ENCODE measurements at regions of chr7 and their contacts with region 1.

Region 1: GRCh38 chr7:128739048-128739962 is at the start of gene CALU:
- DNase-seq: peak; percentile 99
- H3K4me3 Mint-ChIP-seq: peak within 1 kb of the TSS; percentile 99
- H3K27ac Mint-ChIP-seq: peak within 1 kb of the TSS; percentile 93
- H3K4me1 Mint-ChIP-seq: peaks cover 28% of the 10 kb centered on the region
- H3K27me3 Mint-ChIP-seq: no peaks in the 10 kb centered on the region
- total RNA-seq, gene CALU: 56.2 and 57.2 TPM in 2 replicates

Region 2: DNA sequence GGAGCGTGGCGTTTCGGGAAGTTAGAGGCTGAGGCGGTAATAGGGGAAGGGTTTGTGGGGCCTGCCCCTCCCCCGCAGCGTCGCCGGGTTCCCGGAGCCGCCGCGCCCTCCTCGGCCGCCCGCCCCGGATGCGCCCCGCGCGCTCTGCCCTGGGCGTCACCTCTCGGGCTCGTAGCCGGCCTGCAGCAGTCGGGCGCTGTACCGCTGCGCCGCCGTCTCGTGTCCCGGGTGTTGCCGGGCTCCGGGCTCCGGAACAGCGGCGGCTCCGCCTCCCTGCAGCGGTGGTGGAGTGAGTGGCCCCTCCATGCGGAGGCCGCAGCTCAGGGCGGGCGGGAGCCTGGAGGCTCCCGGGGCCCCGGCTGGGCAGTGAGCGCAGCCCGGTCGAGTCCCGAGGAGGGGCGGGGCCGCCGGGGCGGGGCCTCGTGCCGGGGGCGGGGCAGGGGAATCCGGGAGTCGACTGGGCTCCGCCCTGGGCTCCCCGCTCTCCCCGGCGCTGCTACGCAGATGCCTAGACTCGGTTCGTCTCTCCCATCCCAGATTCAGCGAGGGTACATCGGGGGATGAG is 329.6 kb before region 1 on chr7 and contains the start of gene IMPDH1:
- intact Hi-C with region 1: loop called (anchors 5 kb)
- DNase-seq: peak; percentile 96
- H3K4me3 Mint-ChIP-seq: peak within 1 kb of the TSS; percentile 93
- H3K27ac Mint-ChIP-seq: peak within 1 kb of the TSS; percentile 87
- H3K4me1 Mint-ChIP-seq: peaks cover 37% of the 10 kb centered on the region
- H3K27me3 Mint-ChIP-seq: peaks cover 22% of the 10 kb centered on the region
- total RNA-seq, gene IMPDH1: 102 and 105 TPM in 2 replicates

Region 3: DNA sequence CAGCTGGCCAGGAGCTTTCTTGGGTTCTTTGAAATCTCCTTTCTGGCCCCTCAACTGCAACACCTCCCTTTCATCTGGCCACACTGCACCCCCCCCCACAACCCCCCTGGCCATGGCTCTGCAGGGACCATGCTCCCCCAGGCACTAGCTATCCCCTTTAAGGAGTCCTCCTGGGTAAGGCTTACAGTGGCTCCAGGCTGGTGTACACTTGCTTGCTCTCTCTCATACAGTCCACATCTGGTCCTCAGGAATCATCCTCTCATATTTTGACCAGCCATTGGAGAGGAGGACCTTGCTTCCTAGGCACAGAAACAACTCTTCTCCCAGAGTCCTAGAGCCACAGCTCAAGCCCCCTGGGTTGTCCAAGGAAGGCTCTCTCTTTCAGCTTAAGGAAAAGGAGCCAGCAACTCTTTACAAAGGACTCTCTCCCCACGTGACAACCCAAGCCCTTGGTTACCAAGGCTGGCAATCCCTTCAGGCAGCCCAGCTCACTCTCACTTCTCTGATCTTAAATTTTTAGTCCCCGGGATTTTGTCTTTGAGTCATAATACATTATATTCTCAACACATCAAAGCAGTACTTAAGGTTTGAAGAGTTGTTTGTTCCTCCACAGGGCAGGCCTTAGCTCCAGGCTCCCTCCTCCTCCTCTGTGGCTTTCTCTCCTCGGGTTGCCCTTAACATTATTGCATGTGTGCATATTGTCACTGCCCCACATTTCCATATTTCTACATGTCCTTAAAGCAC is 57.3 kb before region 1 on chr7:
- intact Hi-C with region 1: no loop called
- DNase-seq: no peak
- H3K4me3 Mint-ChIP-seq: no peak overlapping the region
- H3K27ac Mint-ChIP-seq: no peak overlapping the region
- H3K4me1 Mint-ChIP-seq: no peaks in the 10 kb centered on the region
- H3K27me3 Mint-ChIP-seq: no peaks in the 10 kb centered on the region

Region 4: DNA sequence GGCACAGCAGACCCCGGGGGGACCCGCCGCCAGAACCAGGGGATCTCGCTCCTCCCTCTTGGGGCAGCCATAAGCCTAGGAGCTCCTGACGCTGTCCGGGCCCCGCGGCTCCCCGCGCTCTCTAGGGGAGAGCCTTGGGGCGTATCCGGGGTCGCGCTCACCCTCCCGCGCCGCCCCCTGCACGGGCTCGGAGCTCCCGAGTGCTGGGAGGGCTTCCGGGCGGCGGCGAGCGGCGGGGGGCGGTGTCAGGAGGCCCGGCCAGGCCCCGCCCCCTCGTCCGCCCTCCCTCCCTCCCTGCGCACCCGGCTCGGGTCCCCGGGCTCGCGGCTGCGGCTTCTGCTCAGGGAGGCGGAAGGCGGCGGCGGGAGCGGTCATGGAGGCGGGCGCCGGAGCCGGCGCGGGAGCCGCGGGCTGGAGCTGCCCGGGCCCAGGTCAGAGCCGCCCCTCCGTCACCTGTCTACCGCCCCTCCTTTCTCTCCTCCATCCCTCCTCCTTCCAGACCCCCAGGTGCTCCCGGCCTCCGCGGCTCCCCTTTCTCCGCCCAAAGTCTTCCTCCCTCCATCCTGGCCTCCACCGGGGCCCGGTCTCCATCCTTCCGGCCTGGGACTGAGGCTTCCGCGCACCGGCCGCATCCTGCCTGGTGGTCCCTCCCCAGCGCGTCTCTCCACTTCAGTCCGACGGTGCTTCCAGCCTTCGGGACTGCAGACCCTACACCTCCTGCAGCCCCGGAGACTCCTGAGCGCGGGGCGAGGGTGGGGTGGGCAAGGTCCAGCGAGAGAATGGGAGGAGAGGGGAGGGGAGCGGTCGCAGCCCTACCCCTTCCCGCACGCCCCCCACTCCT is 52.0 kb after region 1 on chr7:
- intact Hi-C with region 1: loop called (anchors 1 kb)
- DNase-seq: peak; percentile 93
- H3K4me3 Mint-ChIP-seq: peak overlapping the region; percentile 88
- H3K27ac Mint-ChIP-seq: peak overlapping the region; percentile 64
- H3K4me1 Mint-ChIP-seq: peaks cover 9% of the 10 kb centered on the region
- H3K27me3 Mint-ChIP-seq: peaks cover 32% of the 10 kb centered on the region

Region 5: GRCh38 chr7:128862571-128863432 is 123.5 kb after region 1 on chr7 and contains the start of gene ATP6V1F:
- intact Hi-C with region 1: loop called (anchors 1 kb)
- DNase-seq: peak; percentile 100
- H3K4me3 Mint-ChIP-seq: peak within 1 kb of the TSS; percentile 93
- H3K27ac Mint-ChIP-seq: peak within 1 kb of the TSS; percentile 96
- H3K4me1 Mint-ChIP-seq: peaks cover 24% of the 10 kb centered on the region
- H3K27me3 Mint-ChIP-seq: peaks cover 4% of the 10 kb centered on the region
- total RNA-seq, gene ATP6V1F: 127 and 132 TPM in 2 replicates